ENCODE measurements at regions of chr22 and their contacts with region 1.

Region 1: DNA sequence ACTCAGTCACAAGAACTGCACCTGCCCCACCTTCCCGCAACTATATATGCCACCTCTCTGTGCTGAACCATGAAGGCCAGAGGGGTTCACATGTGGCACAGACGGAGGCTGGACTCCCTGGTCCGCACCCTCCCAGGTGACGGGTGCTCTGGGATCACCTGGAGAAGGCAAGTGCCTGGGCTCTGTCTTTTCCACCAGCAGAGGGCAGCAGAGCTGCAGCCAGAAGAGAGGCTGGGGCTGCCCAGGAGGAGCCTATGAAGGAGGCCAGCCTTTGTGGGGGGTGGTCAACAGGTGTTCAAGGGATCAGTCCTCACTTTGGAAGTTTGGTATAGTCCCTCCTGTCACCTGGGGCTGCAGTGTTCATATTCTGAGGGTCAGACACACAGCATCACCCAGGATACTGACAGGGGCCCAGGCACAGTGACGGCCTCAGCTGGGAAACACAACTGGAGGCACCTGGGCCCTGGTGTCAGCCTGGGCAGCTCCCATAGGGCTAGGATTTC is 39.2 kb upstream of the IGLL5 start:
- DNase-seq: peak; percentile 77
- ATAC-seq: peak; percentile 95
- H3K4me3 Mint-ChIP-seq: no peak overlapping the region
- H3K27ac Mint-ChIP-seq: no peak overlapping the region
- H3K4me1 Mint-ChIP-seq: peaks cover 5% of the 10 kb centered on the region
- H3K27me3 Mint-ChIP-seq: peaks cover 24% of the 10 kb centered on the region

Region 2: DNA sequence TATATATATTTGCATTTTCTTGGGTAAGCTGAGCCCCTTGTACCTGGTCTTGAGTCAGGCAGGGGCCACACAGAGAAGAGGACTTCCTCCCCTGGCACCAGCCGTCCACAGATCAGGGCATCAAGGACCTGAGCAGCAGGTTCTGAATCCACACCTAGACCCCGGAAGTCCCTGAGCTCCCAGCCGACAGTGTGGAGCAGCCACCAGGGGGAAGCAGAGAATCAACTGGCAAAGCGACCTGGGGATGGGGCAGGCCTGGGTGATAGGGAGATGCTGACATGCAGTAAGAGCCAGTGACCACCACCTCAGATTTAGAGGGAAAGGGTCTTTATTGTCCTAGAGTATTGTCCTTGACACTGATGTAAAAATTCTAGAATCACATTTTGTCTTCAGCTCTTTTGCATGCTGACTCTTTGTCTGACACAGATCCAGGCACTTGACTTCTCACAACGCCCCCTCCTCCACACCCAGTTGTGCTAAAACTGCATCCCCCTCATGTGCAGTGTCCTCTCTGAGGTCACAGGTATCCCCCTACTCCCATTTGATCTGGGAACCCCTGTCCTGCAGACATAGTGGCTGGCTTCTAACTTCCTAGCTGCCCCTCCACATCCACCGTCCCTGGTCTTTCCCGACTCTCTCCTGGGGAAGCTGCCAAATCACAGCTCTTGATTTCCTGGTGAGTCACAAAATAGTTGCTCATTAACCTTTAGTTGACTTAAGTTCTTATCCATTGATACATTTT is 94.7 kb before region 1 on chr22:
- CTCF ChIA-PET with region 1: interaction called, 29 read pairs
- POLR2A ChIA-PET with region 1: no interaction called
- DNase-seq: peak; percentile 86
- ATAC-seq: peak; percentile 97
- H3K4me3 Mint-ChIP-seq: no peak overlapping the region
- H3K27ac Mint-ChIP-seq: no peak overlapping the region
- H3K4me1 Mint-ChIP-seq: peaks cover 34% of the 10 kb centered on the region
- H3K27me3 Mint-ChIP-seq: peaks cover 6% of the 10 kb centered on the region

Region 3: GRCh38 chr22:22787786-22788459 is 60.5 kb before region 1 on chr22:
- CTCF ChIA-PET with region 1: interaction called, 44 read pairs
- POLR2A ChIA-PET with region 1: no interaction called
- DNase-seq: peak; percentile 81
- ATAC-seq: peak; percentile 90
- H3K4me3 Mint-ChIP-seq: no peak overlapping the region
- H3K27ac Mint-ChIP-seq: peak overlapping the region; percentile 30
- H3K4me1 Mint-ChIP-seq: peaks cover 25% of the 10 kb centered on the region
- H3K27me3 Mint-ChIP-seq: peaks cover 13% of the 10 kb centered on the region

Region 4: GRCh38 chr22:22810018-22810427 is 38.4 kb before region 1 on chr22:
- CTCF ChIA-PET with region 1: interaction called, 173 read pairs
- POLR2A ChIA-PET with region 1: no interaction called
- DNase-seq: peak; percentile 75
- ATAC-seq: peak; percentile 88
- H3K4me3 Mint-ChIP-seq: no peak overlapping the region
- H3K27ac Mint-ChIP-seq: no peak overlapping the region
- H3K4me1 Mint-ChIP-seq: peaks cover 5% of the 10 kb centered on the region
- H3K27me3 Mint-ChIP-seq: peaks cover 24% of the 10 kb centered on the region

Region 5: DNA sequence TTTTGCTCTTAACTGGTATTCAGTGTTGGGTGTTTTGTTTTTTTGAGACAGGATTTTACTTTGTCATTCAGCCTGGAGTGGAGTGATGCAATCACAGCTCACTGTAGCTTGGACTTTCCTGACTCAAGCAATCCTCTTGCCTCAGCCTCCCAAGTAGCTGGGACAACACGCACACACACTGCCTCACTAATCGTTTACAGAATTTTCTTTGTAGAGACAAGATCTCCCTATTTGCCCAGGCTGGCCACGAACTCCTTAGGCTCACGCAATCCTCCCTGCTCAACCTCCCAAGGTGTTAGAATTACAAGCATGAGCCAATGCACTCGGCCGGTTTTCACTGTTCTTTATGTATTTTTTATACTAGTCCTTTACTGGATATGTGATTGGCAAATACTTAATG is 11.8 kb before region 1 on chr22:
- CTCF ChIA-PET with region 1: interaction called, 36 read pairs
- POLR2A ChIA-PET with region 1: no interaction called
- DNase-seq: no peak
- ATAC-seq: no peak
- H3K4me3 Mint-ChIP-seq: no peak overlapping the region
- H3K27ac Mint-ChIP-seq: no peak overlapping the region
- H3K4me1 Mint-ChIP-seq: peaks cover 19% of the 10 kb centered on the region
- H3K27me3 Mint-ChIP-seq: peaks cover 29% of the 10 kb centered on the region

Region 6: DNA sequence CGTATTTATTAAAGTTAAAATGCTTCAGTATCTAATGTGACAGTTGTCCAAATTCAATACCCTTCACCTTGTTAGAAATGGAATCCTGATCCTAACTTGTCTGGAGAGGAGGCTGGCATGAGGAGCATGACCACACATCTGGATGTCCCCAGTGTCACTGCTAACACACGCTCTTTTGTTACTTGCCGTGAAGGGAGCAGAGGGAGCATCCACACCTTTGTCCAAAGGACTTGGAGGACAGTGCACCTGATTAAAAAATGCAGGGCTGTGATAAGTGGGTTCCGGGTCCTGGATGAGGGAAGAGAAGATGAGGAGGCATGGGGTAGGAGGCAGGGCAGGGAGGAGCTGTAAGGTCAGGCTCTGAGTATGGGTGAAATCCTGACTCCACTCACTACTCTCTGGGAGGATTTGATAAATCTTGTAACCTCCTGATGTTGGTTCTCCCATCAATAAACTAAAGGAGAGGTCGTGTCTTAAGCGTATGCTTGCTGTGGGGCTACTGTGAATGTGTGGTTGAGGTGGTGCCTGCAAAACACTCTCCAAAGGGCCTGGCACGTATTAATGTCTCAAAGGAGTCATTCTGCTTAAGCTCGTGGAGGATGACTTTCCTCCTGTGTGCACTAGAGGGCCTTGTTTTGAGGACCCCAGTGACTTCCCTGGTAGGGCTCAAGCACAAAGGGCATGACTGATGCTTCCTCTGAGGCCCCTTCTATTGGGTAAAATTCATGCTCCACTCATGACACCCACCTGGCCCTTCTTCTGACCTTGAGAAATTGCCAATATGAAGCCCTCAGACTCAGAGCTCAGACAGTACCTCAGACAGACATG is 22.4 kb after region 1 on chr22:
- CTCF ChIA-PET with region 1: interaction called, 28 read pairs
- POLR2A ChIA-PET with region 1: no interaction called
- DNase-seq: peak; percentile 27
- ATAC-seq: no peak
- H3K4me3 Mint-ChIP-seq: no peak overlapping the region
- H3K27ac Mint-ChIP-seq: no peak overlapping the region
- H3K4me1 Mint-ChIP-seq: peaks cover 13% of the 10 kb centered on the region
- H3K27me3 Mint-ChIP-seq: peaks cover 38% of the 10 kb centered on the region

Region 7: GRCh38 chr22:23012081-23012622 is 163.7 kb after region 1 on chr22:
- CTCF ChIA-PET with region 1: no interaction called
- POLR2A ChIA-PET with region 1: no interaction called
- DNase-seq: peak; percentile 62
- ATAC-seq: peak; percentile 95
- H3K4me3 Mint-ChIP-seq: no peak overlapping the region
- H3K27ac Mint-ChIP-seq: no peak overlapping the region
- H3K4me1 Mint-ChIP-seq: peaks cover 26% of the 10 kb centered on the region
- H3K27me3 Mint-ChIP-seq: peaks cover 45% of the 10 kb centered on the region